Activated CD4-positive, alpha-beta T cell treated with anti-CD3 and anti-CD28 coated beads, Interleukin-2, amount 10 ng/mL, durations not matched to agents 7 days and 5 days (primary cell): ENCODE measurements at regions of chr1 and their contacts with region 1.

Region 1: GRCh38 chr1:14672005-14672404 is 73.5 kb downstream of the KAZN start:
- DNase-seq: no peak
- H3K4me3 Mint-ChIP-seq: no peak overlapping the region
- H3K27ac Mint-ChIP-seq: no peak overlapping the region
- H3K4me1 Mint-ChIP-seq: no peaks in the 10 kb centered on the region
- H3K27me3 Mint-ChIP-seq: no peaks in the 10 kb centered on the region

Region 2: GRCh38 chr1:13628711-13629110 is 1043.3 kb before region 1 on chr1:
- CTCF ChIA-PET with region 1: no interaction called
- POLR2A ChIA-PET with region 1: interaction called, 10 read pairs
- DNase-seq: no peak
- H3K4me3 Mint-ChIP-seq: no peak overlapping the region
- H3K27ac Mint-ChIP-seq: no peak overlapping the region
- H3K4me1 Mint-ChIP-seq: no peaks in the 10 kb centered on the region
- H3K27me3 Mint-ChIP-seq: no peaks in the 10 kb centered on the region

Region 3: GRCh38 chr1:14689996-14690615 is 18.1 kb after region 1 on chr1:
- CTCF ChIA-PET with region 1: no interaction called
- POLR2A ChIA-PET with region 1: no interaction called
- DNase-seq: no peak
- H3K4me3 Mint-ChIP-seq: no peak overlapping the region
- H3K27ac Mint-ChIP-seq: no peak overlapping the region
- H3K4me1 Mint-ChIP-seq: no peaks in the 10 kb centered on the region
- H3K27me3 Mint-ChIP-seq: no peaks in the 10 kb centered on the region